ENCODE measurements at regions of chr21 and their contacts with region 1.

Region 1: DNA sequence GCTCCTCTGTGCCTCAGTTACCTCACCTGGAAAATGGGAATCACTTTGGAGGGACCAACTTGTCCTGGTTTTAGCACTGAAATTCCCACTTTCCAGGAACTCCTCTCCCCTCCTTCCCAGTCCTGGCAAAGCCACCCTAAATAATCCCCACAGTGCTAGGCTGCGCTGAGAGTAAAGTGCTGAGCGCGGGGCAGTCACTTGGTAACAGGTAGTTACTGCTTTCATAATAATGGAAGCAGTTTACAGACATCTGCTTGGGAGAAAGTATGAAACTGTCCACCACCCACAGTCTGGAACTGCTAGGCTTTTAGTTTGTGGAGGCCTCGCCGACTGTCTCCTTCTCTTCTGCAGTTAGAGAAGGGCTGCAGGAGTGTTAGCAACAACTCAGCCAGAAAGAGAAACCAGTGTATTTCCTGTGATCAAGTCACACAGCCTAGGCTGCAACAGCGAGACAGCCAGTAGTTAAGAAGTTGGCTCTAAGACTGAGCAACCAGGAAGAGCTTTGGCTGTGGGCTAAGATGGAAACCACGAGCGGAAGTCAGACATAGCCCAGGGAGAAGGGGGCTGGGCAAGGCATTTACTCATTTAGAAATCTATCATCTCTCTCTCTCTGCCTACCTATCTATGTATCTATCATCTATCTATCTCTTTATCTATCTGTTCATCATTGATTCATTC is 30.8 kb upstream of the ABCG1 start:
- DNase-seq: peak; percentile 95
- H3K4me3 Mint-ChIP-seq: peak overlapping the region; percentile 68
- H3K27ac Mint-ChIP-seq: peak overlapping the region; percentile 93
- H3K4me1 Mint-ChIP-seq: peaks cover 65% of the 10 kb centered on the region
- H3K27me3 Mint-ChIP-seq: peaks cover 2% of the 10 kb centered on the region

Region 2: DNA sequence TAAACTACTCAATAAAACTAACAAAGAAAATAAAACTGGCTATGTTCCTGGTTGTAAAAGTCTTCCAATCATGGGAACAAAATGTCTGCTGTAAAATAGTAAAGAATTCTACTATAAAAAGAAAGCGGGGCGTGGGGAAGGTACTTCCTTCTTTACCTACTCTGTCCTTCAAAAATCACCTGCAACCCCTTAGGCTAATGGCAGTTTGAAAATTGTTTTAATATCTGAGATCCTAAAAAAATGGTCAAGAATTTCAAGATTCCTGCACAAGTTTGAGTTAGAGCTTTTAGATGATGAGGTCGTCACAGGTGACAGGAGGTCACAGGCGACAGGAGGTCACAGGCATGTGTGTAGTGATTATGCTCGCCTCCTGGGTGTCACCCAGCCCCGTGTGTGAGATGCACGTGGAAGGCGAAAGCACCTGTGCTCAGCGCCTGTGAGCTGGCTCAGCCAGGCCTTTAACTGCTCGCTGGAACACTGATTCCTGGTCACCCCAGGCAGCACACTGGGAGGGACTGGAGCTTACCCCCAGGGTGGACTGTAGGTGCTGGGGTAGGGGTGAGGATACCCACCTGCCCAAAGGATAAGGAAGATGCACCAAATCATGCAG is 661.5 kb before region 1 on chr21:
- intact Hi-C with region 1: no loop called
- DNase-seq: no peak
- H3K4me3 Mint-ChIP-seq: no peak overlapping the region
- H3K27ac Mint-ChIP-seq: no peak overlapping the region
- H3K4me1 Mint-ChIP-seq: no peaks in the 10 kb centered on the region
- H3K27me3 Mint-ChIP-seq: peaks cover 2% of the 10 kb centered on the region

Region 3: GRCh38 chr21:42220138-42220701 is 32.1 kb after region 1 on chr21:
- intact Hi-C with region 1: loop called (anchors 1 kb)
- DNase-seq: peak; percentile 95
- H3K4me3 Mint-ChIP-seq: peak overlapping the region; percentile 89
- H3K27ac Mint-ChIP-seq: peak overlapping the region; percentile 89
- H3K4me1 Mint-ChIP-seq: peaks cover 23% of the 10 kb centered on the region
- H3K27me3 Mint-ChIP-seq: peaks cover 2% of the 10 kb centered on the region

Region 4: GRCh38 chr21:42227909-42228708 is 40.0 kb after region 1 on chr21:
- intact Hi-C with region 1: loop called (anchors 1 kb)
- DNase-seq: peak; percentile 97
- H3K4me3 Mint-ChIP-seq: peak overlapping the region; percentile 57
- H3K27ac Mint-ChIP-seq: peak overlapping the region; percentile 87
- H3K4me1 Mint-ChIP-seq: peaks cover 68% of the 10 kb centered on the region
- H3K27me3 Mint-ChIP-seq: no peaks in the 10 kb centered on the region

Region 5: GRCh38 chr21:42258153-42258884 is 70.2 kb after region 1 on chr21:
- intact Hi-C with region 1: no loop called
- DNase-seq: peak; percentile 94
- H3K4me3 Mint-ChIP-seq: no peak overlapping the region
- H3K27ac Mint-ChIP-seq: no peak overlapping the region
- H3K4me1 Mint-ChIP-seq: peaks cover 16% of the 10 kb centered on the region
- H3K27me3 Mint-ChIP-seq: peaks cover 2% of the 10 kb centered on the region

Region 6: GRCh38 chr21:42392721-42393442 is 204.8 kb after region 1 on chr21:
- intact Hi-C with region 1: loop called (anchors 5 kb)
- DNase-seq: peak; percentile 75
- H3K4me3 Mint-ChIP-seq: peak overlapping the region; percentile 71
- H3K27ac Mint-ChIP-seq: peak overlapping the region; percentile 82
- H3K4me1 Mint-ChIP-seq: peaks cover 70% of the 10 kb centered on the region
- H3K27me3 Mint-ChIP-seq: no peaks in the 10 kb centered on the region

Measured in activated CD4-positive, alpha-beta T cell treated with anti-CD3 and anti-CD28 coated beads, Interleukin-2, amount 10 ng/mL, durations not matched to agents 24 days and 14 days (primary cell).